CD8-positive, alpha-beta T cell (primary cell): ENCODE measurements at regions of chr3 and their contacts with region 1.

Region 1: DNA sequence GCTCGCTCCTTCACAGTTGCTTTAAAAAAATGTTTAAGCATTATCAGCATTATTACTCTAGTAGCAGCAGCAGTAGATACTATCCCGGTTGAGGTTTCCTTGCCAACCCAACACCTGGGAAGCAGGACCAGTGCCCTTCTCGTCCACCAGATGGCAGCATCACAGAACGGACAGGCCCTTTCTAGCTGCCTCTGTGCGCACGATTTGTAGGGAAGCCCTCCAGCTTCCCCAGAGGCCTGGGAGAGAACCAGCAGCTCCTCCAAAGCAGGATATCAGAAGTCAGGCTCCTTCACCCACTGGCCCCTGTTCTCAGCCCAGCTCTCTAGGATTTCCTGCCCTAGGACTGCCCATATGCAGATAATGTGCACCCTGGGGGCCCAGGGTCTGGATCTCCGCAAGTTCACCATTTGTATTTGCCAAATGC is 16.8 kb upstream of the ESYT3 start:
- DNase-seq: peak; percentile 29 to 71 (median 63)
- ATAC-seq: peak; percentile 69
- H3K4me3 ChIP-seq: no peak overlapping the region
- H3K4me3 Mint-ChIP-seq: no peak overlapping the region
- H3K27ac ChIP-seq: no peak overlapping the region
- H3K27ac Mint-ChIP-seq: no peak overlapping the region
- H3K4me1 ChIP-seq: no peaks in the 10 kb centered on the region
- H3K4me1 Mint-ChIP-seq: no peaks in the 10 kb centered on the region
- H3K27me3 ChIP-seq: peaks cover 0 to 3% of the 10 kb centered on the region in 2 experiments
- H3K27me3 Mint-ChIP-seq: peaks cover 7% of the 10 kb centered on the region
- CTCF ChIP-seq: peak; percentile 71

Region 2: GRCh38 chr3:138180375-138181029 is 237.1 kb before region 1 on chr3:
- CTCF ChIA-PET with region 1: interaction called, 6 read pairs
- POLR2A ChIA-PET with region 1: no interaction called
- intact Hi-C with region 1: loop called in 1 of 2 experiments (anchors 5 kb)
- DNase-seq: peak in 5 of 9 experiments; percentile 20 to 64 (median 32)
- ATAC-seq: peak; percentile 91
- H3K4me3 ChIP-seq: no peak overlapping the region
- H3K4me3 Mint-ChIP-seq: no peak overlapping the region
- H3K27ac ChIP-seq: no peak overlapping the region
- H3K27ac Mint-ChIP-seq: no peak overlapping the region
- H3K4me1 ChIP-seq: no peaks in the 10 kb centered on the region
- H3K4me1 Mint-ChIP-seq: no peaks in the 10 kb centered on the region
- H3K27me3 ChIP-seq: peaks cover 0 to 3% of the 10 kb centered on the region in 2 experiments
- H3K27me3 Mint-ChIP-seq: peaks cover 5% of the 10 kb centered on the region
- CTCF ChIP-seq: no peak

Region 3: GRCh38 chr3:138397983-138398382 is 19.6 kb before region 1 on chr3:
- CTCF ChIA-PET with region 1: interaction called, 53 read pairs
- POLR2A ChIA-PET with region 1: no interaction called
- intact Hi-C with region 1: no loop called
- DNase-seq: peak in 1 of 9 experiments; percentile 18
- ATAC-seq: no peak
- H3K4me3 ChIP-seq: no peak overlapping the region
- H3K4me3 Mint-ChIP-seq: no peak overlapping the region
- H3K27ac ChIP-seq: no peak overlapping the region
- H3K27ac Mint-ChIP-seq: no peak overlapping the region
- H3K4me1 ChIP-seq: no peaks in the 10 kb centered on the region
- H3K4me1 Mint-ChIP-seq: no peaks in the 10 kb centered on the region
- H3K27me3 ChIP-seq: no peaks in the 10 kb centered on the region
- H3K27me3 Mint-ChIP-seq: peaks cover 8% of the 10 kb centered on the region
- CTCF ChIP-seq: no peak

Region 4: DNA sequence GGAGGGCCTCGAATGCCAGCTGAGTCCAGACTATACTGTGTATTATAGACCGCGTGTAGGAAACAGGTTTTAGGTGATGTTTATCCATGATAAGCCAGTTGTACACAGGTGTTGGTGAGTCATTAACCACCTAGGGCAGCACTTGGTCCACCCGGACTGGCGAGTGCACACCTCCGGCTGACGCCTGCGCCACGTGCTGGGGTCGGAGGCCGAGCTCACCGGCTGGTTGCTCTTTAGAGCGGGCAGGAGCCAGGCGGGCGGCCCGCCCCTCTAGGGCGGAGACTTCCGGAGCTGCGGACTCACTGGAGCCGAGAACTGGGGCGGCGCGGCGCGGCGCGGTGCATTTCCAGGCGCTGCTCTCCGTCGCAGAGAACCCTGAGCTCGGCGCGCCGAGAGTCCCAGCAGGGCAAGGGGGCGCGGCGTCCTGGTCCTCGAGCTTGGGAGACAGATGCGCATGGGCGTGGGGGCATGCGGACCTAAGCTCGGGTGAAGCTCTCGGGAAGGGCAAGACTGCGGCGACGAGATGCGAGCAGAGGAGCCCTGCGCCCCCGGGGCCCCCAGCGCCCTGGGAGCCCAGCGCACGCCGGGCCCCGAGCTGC is 16.8 kb after region 1 on chr3 and contains the start of gene ESYT3:
- CTCF ChIA-PET with region 1: interaction called, 21 read pairs
- POLR2A ChIA-PET with region 1: no interaction called
- intact Hi-C with region 1: no loop called
- DNase-seq: peak in 6 of 9 experiments; percentile 4 to 49 (median 22)
- ATAC-seq: peak; percentile 62
- H3K4me3 ChIP-seq: peak within 1 kb of the TSS; percentile 36 to 39
- H3K4me3 Mint-ChIP-seq: peak within 1 kb of the TSS; percentile 64
- H3K27ac ChIP-seq: no peak within 1 kb of the TSS
- H3K27ac Mint-ChIP-seq: no peak within 1 kb of the TSS
- H3K4me1 ChIP-seq: no peaks in the 10 kb centered on the region
- H3K4me1 Mint-ChIP-seq: peaks cover 14% of the 10 kb centered on the region
- H3K27me3 ChIP-seq: peaks cover 9 to 21% of the 10 kb centered on the region in 2 experiments
- H3K27me3 Mint-ChIP-seq: peaks cover 43% of the 10 kb centered on the region
- CTCF ChIP-seq: no peak
- total RNA-seq, gene ESYT3: not detected

Region 5: GRCh38 chr3:138705675-138706074 is 288.1 kb after region 1 on chr3:
- CTCF ChIA-PET with region 1: no interaction called
- POLR2A ChIA-PET with region 1: no interaction called
- intact Hi-C with region 1: loop called in 1 of 2 experiments (anchors 10 kb)
- DNase-seq: no peak
- ATAC-seq: no peak
- H3K4me3 ChIP-seq: no peak overlapping the region
- H3K4me3 Mint-ChIP-seq: no peak overlapping the region
- H3K27ac ChIP-seq: no peak overlapping the region
- H3K27ac Mint-ChIP-seq: no peak overlapping the region
- H3K4me1 ChIP-seq: no peaks in the 10 kb centered on the region
- H3K4me1 Mint-ChIP-seq: no peaks in the 10 kb centered on the region
- H3K27me3 ChIP-seq: no peaks in the 10 kb centered on the region
- H3K27me3 Mint-ChIP-seq: no peaks in the 10 kb centered on the region
- CTCF ChIP-seq: no peak

Region 6: GRCh38 chr3:139329345-139329850 is 911.8 kb after region 1 on chr3:
- CTCF ChIA-PET with region 1: interaction called, 3 read pairs
- POLR2A ChIA-PET with region 1: no interaction called
- intact Hi-C with region 1: loop called in 1 of 2 experiments (anchors 1 kb)
- DNase-seq: peak; percentile 68 to 92 (median 85)
- ATAC-seq: peak; percentile 96
- H3K4me3 ChIP-seq: peak overlapping the region; percentile 21 to 36
- H3K4me3 Mint-ChIP-seq: peak overlapping the region; percentile 69
- H3K27ac ChIP-seq: no peak overlapping the region
- H3K27ac Mint-ChIP-seq: no peak overlapping the region
- H3K4me1 ChIP-seq: peaks cover 9% of the 10 kb centered on the region
- H3K4me1 Mint-ChIP-seq: peaks cover 17% of the 10 kb centered on the region
- H3K27me3 ChIP-seq: peaks cover 3 to 4% of the 10 kb centered on the region in 2 experiments
- H3K27me3 Mint-ChIP-seq: peaks cover 34% of the 10 kb centered on the region
- CTCF ChIP-seq: peak; percentile 95